Panc1 (cell line): ENCODE measurements at regions of chr17 and their contacts with region 1.

Region 1: DNA sequence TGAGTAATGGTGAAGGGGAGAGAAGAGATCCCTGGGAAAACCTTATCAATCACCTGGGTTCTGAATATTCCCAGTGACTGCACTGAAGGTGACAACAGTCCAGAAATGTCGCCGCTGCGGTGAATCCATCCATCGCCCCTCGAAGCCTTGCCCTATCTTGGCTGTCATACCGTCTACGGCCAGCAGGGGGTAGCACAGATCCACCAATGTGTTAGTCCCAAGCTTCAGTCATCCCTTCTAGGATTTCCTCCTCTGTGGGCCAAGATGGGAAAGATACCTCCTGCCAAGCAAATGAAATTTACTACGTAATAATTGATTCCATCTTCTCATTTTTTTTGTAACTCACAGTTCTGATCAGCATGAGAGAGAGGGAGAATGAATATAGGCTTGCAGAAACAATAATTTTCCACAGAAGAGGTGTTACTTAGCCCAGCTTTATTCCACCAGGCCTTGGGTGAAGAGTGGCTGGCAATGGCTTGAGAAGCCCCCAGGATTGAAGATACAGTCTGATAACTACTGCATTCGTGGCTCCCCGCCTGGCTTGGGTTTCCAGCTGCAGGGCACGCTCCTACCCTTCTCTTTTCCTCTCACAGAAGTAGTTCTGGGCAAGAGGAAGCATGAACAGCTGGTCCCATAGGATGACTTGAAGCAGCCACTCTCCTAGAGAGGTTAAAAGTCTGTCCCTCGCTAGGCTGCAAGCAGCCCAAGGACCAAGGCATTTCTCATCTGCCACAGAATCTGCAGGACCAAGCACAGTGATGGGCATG is 2.6 kb upstream of the FMNL1 start:
- DNase-seq: no peak
- ATAC-seq: peak; percentile 81
- H3K4me3 ChIP-seq: no peak overlapping the region
- H3K27ac ChIP-seq: no peak overlapping the region
- H3K4me1 ChIP-seq: peaks cover 10% of the 10 kb centered on the region
- H3K27me3 ChIP-seq: no peaks in the 10 kb centered on the region
- CTCF ChIP-seq: peak; percentile 83

Region 2: GRCh38 chr17:45235416-45236281 is 16.6 kb after region 1 on chr17:
- CTCF ChIA-PET with region 1: interaction called, 14 read pairs
- POLR2A ChIA-PET with region 1: no interaction called
- in situ Hi-C with region 1: no loop called
- intact Hi-C with region 1: loop called (anchors 1 kb)
- DNase-seq: no peak
- ATAC-seq: peak; percentile 65
- H3K4me3 ChIP-seq: no peak overlapping the region
- H3K27ac ChIP-seq: no peak overlapping the region
- H3K4me1 ChIP-seq: peaks cover 9% of the 10 kb centered on the region
- H3K27me3 ChIP-seq: no peaks in the 10 kb centered on the region
- CTCF ChIP-seq: peak; percentile 86

Region 3: DNA sequence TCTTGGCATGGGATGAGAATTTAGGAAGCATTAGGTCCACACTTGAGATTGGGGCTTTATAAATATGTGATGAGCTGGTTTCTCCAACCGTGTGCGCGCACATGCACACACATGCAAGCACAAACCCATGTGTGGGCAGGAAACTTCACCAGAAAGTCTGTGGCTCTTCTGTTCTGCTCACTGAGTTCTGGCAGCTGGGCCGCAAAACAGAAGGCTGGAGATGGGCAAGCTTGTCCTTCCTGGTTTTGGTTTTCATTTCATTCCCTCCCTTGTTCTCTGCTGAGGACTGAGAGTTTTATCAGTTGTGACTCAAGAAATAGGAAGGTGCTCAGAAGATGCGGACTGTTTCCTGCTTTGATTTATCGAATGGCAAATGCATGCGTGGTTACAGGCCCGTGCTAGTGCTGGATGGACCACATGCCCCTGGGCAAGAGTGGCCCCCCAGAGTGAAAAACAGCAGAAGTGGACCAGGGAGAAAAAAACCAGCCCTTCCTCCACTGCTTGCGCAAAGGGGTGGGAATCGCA is 83.6 kb after region 1 on chr17:
- CTCF ChIA-PET with region 1: no interaction called
- POLR2A ChIA-PET with region 1: no interaction called
- in situ Hi-C with region 1: no loop called
- intact Hi-C with region 1: no loop called
- DNase-seq: no peak
- ATAC-seq: peak; percentile 10; the same call in 1 of the 2 replicates
- H3K4me3 ChIP-seq: no peak overlapping the region; a peak in 1 of 4 replicates
- H3K27ac ChIP-seq: peak overlapping the region; percentile 93
- H3K4me1 ChIP-seq: peaks cover 89% of the 10 kb centered on the region
- H3K27me3 ChIP-seq: no peaks in the 10 kb centered on the region
- CTCF ChIP-seq: no peak

Region 4: GRCh38 chr17:45357364-45357997 is 138.4 kb after region 1 on chr17:
- CTCF ChIA-PET with region 1: no interaction called
- POLR2A ChIA-PET with region 1: interaction called, 12 read pairs
- in situ Hi-C with region 1: no loop called
- intact Hi-C with region 1: no loop called
- DNase-seq: no peak
- ATAC-seq: no peak
- H3K4me3 ChIP-seq: no peak overlapping the region
- H3K27ac ChIP-seq: peak overlapping the region; percentile 14; the same call in 1 of the 2 replicates
- H3K4me1 ChIP-seq: peaks cover 4% of the 10 kb centered on the region; the same call in 1 of the 2 replicates
- H3K27me3 ChIP-seq: no peaks in the 10 kb centered on the region
- CTCF ChIP-seq: no peak